ENCODE measurements at regions of chr17 and their contacts with region 1.

Region 1: GRCh38 chr17:77429919-77430752 is 289.4 kb downstream of the SEC14L1 start:
- DNase-seq: peak; percentile 76
- H3K4me3 ChIP-seq: no peak overlapping the region
- H3K27ac ChIP-seq: peak overlapping the region; percentile 80 to 90
- H3K4me1 ChIP-seq: peaks cover 13% of the 10 kb centered on the region
- H3K27me3 ChIP-seq: no peaks in the 10 kb centered on the region
- CTCF ChIP-seq: peak; percentile 47 to 87 (median 80)
- POLR2A ChIP-seq: no peak

Region 2: DNA sequence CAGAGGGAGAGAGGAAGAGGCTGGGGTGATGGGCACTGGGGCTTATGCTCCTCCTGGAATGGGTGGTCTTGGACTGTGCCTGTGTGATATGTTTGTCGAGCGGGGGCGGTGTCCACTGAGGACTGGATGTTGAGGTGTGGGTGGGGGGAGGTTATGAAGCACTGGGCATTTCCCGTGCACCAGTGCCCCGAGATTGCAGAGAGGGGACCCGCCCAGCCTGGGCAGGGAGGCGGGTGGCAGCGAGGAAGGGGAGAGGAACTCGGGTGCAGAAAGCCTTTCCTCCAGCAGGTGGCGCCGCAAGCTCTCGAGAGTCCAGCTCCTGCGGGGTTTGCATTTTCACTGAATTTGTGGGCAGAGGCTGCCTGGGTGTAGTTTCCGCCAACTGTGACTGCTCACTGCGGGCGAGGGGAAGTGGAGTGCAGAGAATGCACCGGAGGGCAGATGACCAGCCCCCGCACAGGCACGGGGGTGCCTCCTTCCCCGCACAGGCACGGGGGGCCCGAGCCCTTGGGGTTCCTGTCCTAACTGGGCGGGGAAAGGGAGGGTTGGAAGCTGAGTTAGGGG is 98.8 kb before region 1 on chr17:
- intact Hi-C with region 1: loop called (anchors 5 kb)
- DNase-seq: peak; percentile 89
- H3K4me3 ChIP-seq: no peak overlapping the region
- H3K27ac ChIP-seq: peak overlapping the region; percentile 11 to 32
- H3K4me1 ChIP-seq: no peaks in the 10 kb centered on the region
- H3K27me3 ChIP-seq: no peaks in the 10 kb centered on the region
- CTCF ChIP-seq: peak; percentile 92 to 98 (median 96)
- POLR2A ChIP-seq: no peak

Region 3: DNA sequence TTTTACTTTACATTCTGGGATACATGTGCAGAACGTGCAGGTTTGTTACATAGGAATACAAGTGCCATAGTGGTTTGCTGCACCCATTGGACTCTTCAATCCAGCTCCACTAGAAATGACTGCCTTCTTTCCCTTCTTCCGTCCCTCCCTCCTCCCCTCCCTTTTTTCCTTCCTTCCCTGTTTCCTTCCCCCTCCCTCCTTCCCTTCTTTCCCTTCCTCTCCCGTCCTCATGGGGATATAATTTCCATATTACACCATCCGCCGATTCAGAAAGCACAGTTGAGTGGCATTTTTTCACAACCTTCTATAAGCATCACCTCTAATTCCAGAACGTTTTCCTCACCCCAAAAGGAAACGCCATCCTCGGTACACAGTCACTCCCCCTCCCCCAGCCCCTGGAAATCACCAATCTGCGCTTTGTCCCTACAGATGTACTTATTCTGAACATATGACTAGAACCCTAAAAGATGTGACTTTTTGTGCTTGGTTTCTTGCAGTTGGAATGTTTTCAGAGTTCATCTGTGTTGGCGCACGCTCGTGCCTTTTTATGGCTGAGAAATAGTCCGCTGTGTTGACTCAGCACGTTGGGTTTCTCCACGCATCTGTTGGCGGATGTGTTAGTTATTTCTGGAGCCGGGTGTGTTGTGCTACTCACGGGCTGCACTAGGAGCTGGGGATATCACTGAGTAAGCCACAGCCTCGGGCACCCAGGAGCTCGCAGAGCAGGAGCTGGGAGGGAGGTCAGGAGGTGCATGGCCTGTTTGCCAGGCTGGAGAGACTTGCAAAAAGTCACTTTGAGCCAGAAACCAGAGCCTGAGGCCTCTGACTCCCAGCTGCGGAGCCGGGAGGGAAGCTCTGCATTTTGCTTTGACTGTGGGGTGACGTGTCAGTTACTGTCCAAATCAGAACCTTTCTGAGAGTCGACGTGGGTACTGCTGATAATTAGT is 47.1 kb after region 1 on chr17:
- intact Hi-C with region 1: loop called (anchors 5 kb)
- DNase-seq: peak; percentile 80
- H3K4me3 ChIP-seq: no peak overlapping the region
- H3K27ac ChIP-seq: peak overlapping the region; percentile 74 to 77
- H3K4me1 ChIP-seq: peaks cover 45% of the 10 kb centered on the region
- H3K27me3 ChIP-seq: no peaks in the 10 kb centered on the region
- CTCF ChIP-seq: no peak
- POLR2A ChIP-seq: no peak

Region 4: DNA sequence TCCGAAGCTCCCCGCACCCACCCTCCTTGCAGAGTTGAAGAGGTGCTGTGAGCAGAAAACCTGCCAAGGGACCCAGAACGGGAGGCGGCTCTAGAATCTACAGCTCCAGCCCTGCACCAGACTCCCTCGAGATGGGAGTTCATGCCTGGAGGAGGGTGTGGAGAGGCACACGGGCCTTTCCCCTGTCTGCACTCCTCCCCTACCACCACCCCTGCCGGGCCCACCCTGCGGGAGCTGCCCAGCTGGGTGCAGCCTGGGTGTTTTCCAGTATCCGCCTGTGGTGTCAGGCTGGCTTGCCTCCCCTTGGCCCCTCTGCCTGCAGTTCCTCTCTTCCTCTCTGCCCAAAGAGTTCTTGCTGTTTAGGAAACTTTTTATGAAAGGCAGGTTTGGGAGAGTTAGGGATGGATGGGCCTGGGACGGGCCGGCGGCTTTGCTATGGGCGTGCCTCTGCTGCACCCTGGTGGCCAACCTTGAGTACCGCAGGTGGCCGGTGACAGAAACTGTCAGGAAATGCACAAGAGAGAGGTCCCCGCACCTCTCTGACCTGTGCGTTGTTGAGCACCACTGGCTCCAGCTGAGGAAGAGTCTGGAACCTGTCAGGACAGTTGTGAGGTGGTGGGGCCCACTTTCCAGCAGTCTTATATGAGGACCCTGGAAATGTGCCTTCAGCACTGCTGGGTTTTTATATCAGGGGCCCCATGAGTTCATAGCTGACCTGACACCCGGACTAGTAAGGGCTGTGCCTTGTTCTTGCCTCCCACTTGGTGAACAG is 64.7 kb after region 1 on chr17:
- intact Hi-C with region 1: loop called (anchors 1 kb)
- DNase-seq: peak; percentile 79
- H3K4me3 ChIP-seq: no peak overlapping the region
- H3K27ac ChIP-seq: no peak overlapping the region
- H3K4me1 ChIP-seq: peaks cover 3% of the 10 kb centered on the region
- H3K27me3 ChIP-seq: no peaks in the 10 kb centered on the region
- CTCF ChIP-seq: peak; percentile 99
- POLR2A ChIP-seq: no peak

Region 5: DNA sequence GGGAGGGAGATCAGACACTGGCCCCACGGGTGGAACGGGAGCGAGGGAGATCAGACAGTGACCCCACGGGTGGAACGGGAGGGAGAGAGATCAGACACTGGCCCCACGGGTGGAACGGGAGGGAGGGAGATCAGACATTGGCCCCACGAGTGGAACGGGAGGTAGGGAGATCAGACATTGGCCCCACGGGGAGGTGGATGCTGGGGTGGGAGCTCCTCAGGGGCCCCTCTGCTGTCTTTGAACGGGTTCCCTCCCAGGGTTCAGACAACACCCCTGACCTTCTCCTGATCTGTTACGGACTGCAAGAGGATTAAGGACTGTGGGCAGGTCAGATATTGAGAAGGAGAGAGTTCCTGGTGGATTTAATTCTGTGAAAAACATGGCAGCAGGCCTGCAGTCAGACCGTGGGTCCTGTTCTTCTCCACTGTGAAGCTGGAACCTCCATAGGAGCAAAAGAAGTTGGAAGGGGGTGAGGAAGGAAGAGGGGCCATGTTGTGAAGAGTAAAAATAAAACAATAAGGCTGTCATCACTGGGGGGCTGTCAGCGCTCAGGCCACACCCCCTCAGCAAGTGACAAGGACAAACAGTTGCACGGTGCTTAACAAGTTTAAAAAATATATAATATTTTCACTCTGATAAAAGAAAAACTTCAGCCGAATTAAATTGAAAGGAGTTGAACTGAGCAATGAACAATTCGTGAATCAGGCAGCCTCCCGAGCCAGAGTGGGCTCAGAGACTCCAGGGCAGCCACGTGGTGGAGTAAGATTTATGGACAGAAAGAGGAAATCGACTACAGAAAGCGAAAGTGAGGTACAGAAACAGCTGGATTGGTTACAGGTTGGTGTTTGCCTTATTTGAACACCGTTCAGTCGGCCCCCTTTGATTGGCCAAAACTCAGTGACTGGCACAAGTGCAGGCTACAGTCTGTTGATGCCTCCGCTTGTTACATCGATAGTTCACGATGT is 179.7 kb after region 1 on chr17:
- intact Hi-C with region 1: loop called (anchors 10 kb)
- DNase-seq: peak; percentile 21
- H3K4me3 ChIP-seq: peak overlapping the region in 1 of 2 donors; percentile 9
- H3K27ac ChIP-seq: peak overlapping the region; percentile 9 to 50
- H3K4me1 ChIP-seq: no peaks in the 10 kb centered on the region
- H3K27me3 ChIP-seq: no peaks in the 10 kb centered on the region
- CTCF ChIP-seq: no peak
- POLR2A ChIP-seq: no peak

Measured in prostate gland (tissue), 2 donors.